ENCODE measurements at regions of chr6 and their contacts with region 1.

Region 1: DNA sequence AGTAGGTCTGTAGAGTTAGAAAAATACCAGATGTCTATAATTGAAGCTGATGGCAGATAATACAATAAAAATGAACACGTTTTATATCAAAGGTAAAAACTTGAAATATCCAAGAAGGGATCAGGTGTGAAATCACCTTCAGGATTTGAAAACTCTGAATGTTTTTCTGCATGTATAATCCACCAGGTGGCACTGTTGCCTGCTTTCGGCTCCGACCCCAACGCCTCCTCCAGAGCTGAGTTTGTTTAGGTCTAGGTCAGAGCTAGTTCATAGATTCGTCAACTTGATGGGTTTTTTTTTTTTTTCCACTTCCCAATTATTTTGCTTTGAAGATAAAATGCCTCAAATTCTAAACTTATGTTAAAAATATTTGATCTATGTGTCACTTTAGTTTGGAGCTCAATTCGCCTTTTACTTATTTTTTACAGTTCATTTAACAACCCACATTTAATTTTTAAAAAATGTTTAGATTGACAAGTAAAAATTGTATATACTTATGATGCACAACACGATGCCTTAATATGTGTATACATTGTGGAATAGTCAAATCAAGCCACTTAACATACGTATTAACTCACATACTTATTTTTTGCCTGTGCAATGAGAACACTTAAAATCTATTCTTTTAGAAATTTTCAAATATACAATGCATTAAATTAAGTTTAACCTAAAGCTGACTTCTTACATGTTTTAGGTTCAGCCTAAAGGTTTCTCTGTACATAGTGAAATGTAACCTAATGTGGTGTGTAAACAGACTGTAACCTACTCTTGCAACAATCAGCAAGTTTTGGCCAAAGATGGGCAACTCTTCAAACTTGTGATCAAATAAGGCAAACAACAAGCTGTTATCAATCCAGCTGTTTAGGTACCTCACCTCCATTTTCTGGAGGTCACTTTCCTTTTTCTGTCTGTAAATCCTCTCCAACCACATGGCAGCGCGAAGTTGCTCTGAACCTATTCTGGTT is 39.4 kb upstream of the ENPP4 start:
- DNase-seq: peak; percentile 34 to 52 (median 47)
- H3K4me3 ChIP-seq: no peak overlapping the region
- H3K4me3 Mint-ChIP-seq: no peak overlapping the region
- H3K27ac ChIP-seq: no peak overlapping the region
- H3K27ac Mint-ChIP-seq: no peak overlapping the region
- H3K4me1 ChIP-seq: no peaks in the 10 kb centered on the region
- H3K4me1 Mint-ChIP-seq: peaks cover 0 to 4% (median 0%) of the 10 kb centered on the region in 4 donors
- H3K27me3 ChIP-seq: no peaks in the 10 kb centered on the region
- H3K27me3 Mint-ChIP-seq: peaks cover 13 to 20% of the 10 kb centered on the region in 2 donors

Region 2: GRCh38 chr6:45714741-45715507 is 375.5 kb before region 1 on chr6:
- CTCF ChIA-PET with region 1: no interaction called
- POLR2A ChIA-PET with region 1: no interaction called
- intact Hi-C with region 1: no loop called
- DNase-seq: peak; percentile 62 to 74 (median 68)
- H3K4me3 ChIP-seq: no peak overlapping the region
- H3K4me3 Mint-ChIP-seq: peak overlapping the region; percentile 62 to 78 (median 66)
- H3K27ac ChIP-seq: no peak overlapping the region
- H3K27ac Mint-ChIP-seq: peak overlapping the region in 3 of 7 donors; percentile 3 to 70 (median 58)
- H3K4me1 ChIP-seq: peaks cover 21% of the 10 kb centered on the region
- H3K4me1 Mint-ChIP-seq: peaks cover 19 to 29% (median 23%) of the 10 kb centered on the region in 4 donors
- H3K27me3 ChIP-seq: no peaks in the 10 kb centered on the region
- H3K27me3 Mint-ChIP-seq: peaks cover 0 to 2% of the 10 kb centered on the region in 2 donors

Region 3: GRCh38 chr6:46078294-46078693 is 12.1 kb before region 1 on chr6:
- CTCF ChIA-PET with region 1: interaction called, 13 read pairs
- POLR2A ChIA-PET with region 1: no interaction called
- intact Hi-C with region 1: no loop called
- DNase-seq: no peak
- H3K4me3 ChIP-seq: no peak overlapping the region
- H3K4me3 Mint-ChIP-seq: no peak overlapping the region
- H3K27ac ChIP-seq: no peak overlapping the region
- H3K27ac Mint-ChIP-seq: peak overlapping the region in 2 of 7 donors; percentile 0 to 4
- H3K4me1 ChIP-seq: no peaks in the 10 kb centered on the region
- H3K4me1 Mint-ChIP-seq: peaks cover 6 to 12% (median 8%) of the 10 kb centered on the region in 4 donors
- H3K27me3 ChIP-seq: no peaks in the 10 kb centered on the region
- H3K27me3 Mint-ChIP-seq: no peaks in the 10 kb centered on the region

Region 4: GRCh38 chr6:46129629-46130511 is 39.5 kb after region 1 on chr6 and contains the start of gene ENPP4:
- CTCF ChIA-PET with region 1: interaction called, 18 read pairs
- POLR2A ChIA-PET with region 1: interaction called, 4 read pairs
- intact Hi-C with region 1: loop called (anchors 2 kb)
- DNase-seq: peak; percentile 91 to 98 (median 93)
- H3K4me3 ChIP-seq: peak within 1 kb of the TSS; percentile 86 to 97
- H3K4me3 Mint-ChIP-seq: peak within 1 kb of the TSS; percentile 93 to 98 (median 98)
- H3K27ac ChIP-seq: peak within 1 kb of the TSS; percentile 63
- H3K27ac Mint-ChIP-seq: peak within 1 kb of the TSS; percentile 89 to 97 (median 95)
- H3K4me1 ChIP-seq: peaks cover 30% of the 10 kb centered on the region
- H3K4me1 Mint-ChIP-seq: peaks cover 31 to 56% (median 42%) of the 10 kb centered on the region in 4 donors
- H3K27me3 ChIP-seq: no peaks in the 10 kb centered on the region
- H3K27me3 Mint-ChIP-seq: no peaks in the 10 kb centered on the region
- total RNA-seq, gene ENPP4: 10.9 to 11.1 TPM

Region 5: GRCh38 chr6:46234156-46234556 is 143.8 kb after region 1 on chr6:
- CTCF ChIA-PET with region 1: no interaction called
- POLR2A ChIA-PET with region 1: no interaction called
- intact Hi-C with region 1: no loop called
- DNase-seq: no peak
- H3K4me3 ChIP-seq: no peak overlapping the region
- H3K4me3 Mint-ChIP-seq: no peak overlapping the region
- H3K27ac ChIP-seq: no peak overlapping the region
- H3K27ac Mint-ChIP-seq: no peak overlapping the region
- H3K4me1 ChIP-seq: no peaks in the 10 kb centered on the region
- H3K4me1 Mint-ChIP-seq: no peaks in the 10 kb centered on the region
- H3K27me3 ChIP-seq: no peaks in the 10 kb centered on the region
- H3K27me3 Mint-ChIP-seq: peaks cover 19 to 26% of the 10 kb centered on the region in 2 donors

Region 6: GRCh38 chr6:46491628-46492547 is 401.5 kb after region 1 on chr6:
- CTCF ChIA-PET with region 1: interaction called, 5 read pairs
- POLR2A ChIA-PET with region 1: no interaction called
- intact Hi-C with region 1: loop called (anchors 5 kb)
- DNase-seq: peak in 2 of 5 donors; percentile 1 to 5
- H3K4me3 ChIP-seq: no peak overlapping the region
- H3K4me3 Mint-ChIP-seq: peak overlapping the region; percentile 18 to 61 (median 40)
- H3K27ac ChIP-seq: no peak overlapping the region
- H3K27ac Mint-ChIP-seq: no peak overlapping the region
- H3K4me1 ChIP-seq: no peaks in the 10 kb centered on the region
- H3K4me1 Mint-ChIP-seq: peaks cover 4 to 16% (median 11%) of the 10 kb centered on the region in 4 donors
- H3K27me3 ChIP-seq: peaks cover 20% of the 10 kb centered on the region
- H3K27me3 Mint-ChIP-seq: peaks cover 41 to 55% of the 10 kb centered on the region in 2 donors

Region 7: DNA sequence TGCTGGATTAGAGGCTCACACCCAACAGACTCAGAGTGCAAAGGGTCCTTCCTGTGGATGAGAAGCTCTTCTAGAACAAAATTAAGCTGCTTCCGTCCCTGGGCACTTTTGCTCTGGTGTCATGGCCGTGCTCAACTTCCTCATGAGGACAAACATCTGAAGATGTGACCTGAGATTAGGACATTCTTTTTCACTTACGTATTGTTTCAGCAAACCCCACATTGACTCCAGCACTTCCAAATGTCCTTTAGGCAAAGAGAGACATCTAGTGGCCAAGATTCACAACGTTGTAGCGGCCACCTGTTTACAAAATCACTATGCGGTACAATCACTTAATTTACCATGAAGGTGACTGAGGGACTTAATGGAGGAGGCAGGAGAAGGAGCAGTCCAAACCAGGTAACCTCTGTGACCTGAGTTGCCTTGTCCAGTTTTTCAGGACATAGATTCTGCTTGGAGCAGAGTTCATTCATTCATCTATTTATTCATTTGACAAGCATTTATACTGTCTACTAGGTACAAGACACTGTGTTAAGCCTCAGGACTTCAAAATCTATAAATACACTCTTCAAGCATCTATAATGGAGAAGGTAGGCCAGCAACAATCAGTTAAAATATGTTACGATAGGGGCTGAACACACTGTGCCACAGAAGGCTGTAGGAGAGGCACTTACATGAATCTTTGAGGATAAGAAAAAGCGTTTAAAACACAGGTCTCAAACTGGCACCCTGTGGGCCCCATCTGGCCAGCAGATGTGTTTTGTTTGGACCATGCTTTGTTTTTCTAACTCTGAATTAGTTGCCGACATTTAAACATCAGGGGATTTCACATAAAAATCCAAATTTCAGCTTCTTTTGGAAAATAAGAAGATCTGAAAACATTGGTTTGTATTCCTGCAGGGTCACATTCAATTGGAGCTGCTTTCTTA is 957.3 kb after region 1 on chr6:
- CTCF ChIA-PET with region 1: interaction called, 8 read pairs
- POLR2A ChIA-PET with region 1: no interaction called
- intact Hi-C with region 1: loop called (anchors 5 kb)
- DNase-seq: peak in 2 of 5 donors; percentile 4 to 6
- H3K4me3 ChIP-seq: no peak overlapping the region
- H3K4me3 Mint-ChIP-seq: peak overlapping the region in 1 of 8 donors; percentile 49
- H3K27ac ChIP-seq: no peak overlapping the region
- H3K27ac Mint-ChIP-seq: no peak overlapping the region
- H3K4me1 ChIP-seq: no peaks in the 10 kb centered on the region
- H3K4me1 Mint-ChIP-seq: peaks cover 0 to 3% (median 2%) of the 10 kb centered on the region in 4 donors
- H3K27me3 ChIP-seq: no peaks in the 10 kb centered on the region
- H3K27me3 Mint-ChIP-seq: peaks cover 3 to 9% of the 10 kb centered on the region in 2 donors

Measured in CD4-positive, alpha-beta memory T cell (primary cell).